Heart right ventricle (tissue), 16 donors: ENCODE measurements at regions of chr10 and their contacts with region 1.

Region 1: DNA sequence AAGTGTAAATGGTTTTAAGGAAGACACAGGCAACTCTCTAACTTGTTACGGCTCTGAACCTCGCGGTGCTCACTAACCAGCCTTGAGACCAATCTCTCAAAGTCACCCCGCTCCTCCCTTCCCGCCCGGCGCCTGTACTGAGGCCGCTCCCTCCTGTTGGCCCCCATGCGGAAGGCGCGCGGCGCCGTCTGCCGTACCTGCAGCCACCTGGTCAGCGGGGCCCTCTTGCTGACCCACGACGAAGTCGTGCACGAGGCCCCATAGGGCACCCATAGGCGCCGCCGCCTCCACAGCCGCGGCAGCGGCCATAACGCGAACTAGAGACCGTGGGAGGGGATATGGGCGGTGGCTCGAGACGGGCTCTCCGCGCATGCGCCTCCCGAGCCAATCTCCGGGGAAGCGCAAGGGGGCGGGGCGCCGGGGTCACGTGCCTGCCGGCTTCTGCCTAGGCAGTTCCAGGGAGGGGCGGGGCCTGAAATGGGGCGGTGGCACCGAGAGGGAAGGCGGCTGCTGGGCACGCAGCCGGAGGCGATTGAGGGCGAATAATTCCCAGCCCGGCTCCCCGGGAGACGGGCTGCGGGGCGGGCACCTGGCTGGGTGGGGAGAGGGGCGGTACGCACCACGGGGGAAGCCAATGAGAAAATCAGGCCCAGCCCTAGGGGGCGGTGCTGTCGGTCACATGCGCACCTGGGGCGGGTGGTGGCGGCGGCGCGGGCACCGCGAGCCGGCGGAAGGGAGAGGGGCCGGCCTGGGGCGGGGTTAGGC is at the start of gene MMS19:
- DNase-seq: peak; percentile 99 to 100
- ATAC-seq: peak; percentile 92 to 97 (median 94)
- H3K4me3 ChIP-seq: peak within 1 kb of the TSS; percentile 77 to 100 (median 94)
- H3K27ac ChIP-seq: peak within 1 kb of the TSS; percentile 74 to 97 (median 94)
- H3K4me1 ChIP-seq: peaks cover 9 to 79% (median 58%) of the 10 kb centered on the region in 9 donors
- H3K27me3 ChIP-seq: no peaks in the 10 kb centered on the region
- CTCF ChIP-seq: peak in 6 of 9 donors; percentile 12 to 43 (median 28)
- total RNA-seq, gene MMS19: 34.7 to 49.1 (median 43.8) TPM

Region 2: GRCh38 chr10:97355571-97355975 is 142.7 kb before region 1 on chr10:
- intact Hi-C with region 1: no loop called
- DNase-seq: peak in 1 of 2 donors; percentile 43
- ATAC-seq: peak; percentile 35 to 85 (median 68)
- H3K4me3 ChIP-seq: peak overlapping the region in 1 of 10 donors; percentile 2
- H3K27ac ChIP-seq: peak overlapping the region in 6 of 10 donors; percentile 6 to 72 (median 58)
- H3K4me1 ChIP-seq: peaks cover 0 to 37% (median 15%) of the 10 kb centered on the region in 9 donors
- H3K27me3 ChIP-seq: no peaks in the 10 kb centered on the region
- CTCF ChIP-seq: peak in 8 of 9 donors; percentile 26 to 65 (median 45)

Region 3: GRCh38 chr10:97445722-97446639 is 52.3 kb before region 1 on chr10 and contains the starts of genes EXOSC1 and ZDHHC16:
- intact Hi-C with region 1: loop called in 1 of 10 experiments (anchors 2 kb)
- DNase-seq: peak; percentile 85 to 93
- ATAC-seq: peak; percentile 97 to 99 (median 98)
- H3K4me3 ChIP-seq: peak within 1 kb of the TSS; percentile 68 to 99 (median 96)
- H3K27ac ChIP-seq: peak within 1 kb of the TSS in 8 of 10 donors; percentile 59 to 88 (median 79)
- H3K4me1 ChIP-seq: peaks cover 12 to 51% (median 44%) of the 10 kb centered on the region in 9 donors
- H3K27me3 ChIP-seq: no peaks in the 10 kb centered on the region
- CTCF ChIP-seq: peak in 3 of 9 donors; percentile 16 to 42 (median 18)
- total RNA-seq, gene EXOSC1: 11.7 to 20.3 (median 15.1) TPM
- total RNA-seq, gene ZDHHC16: 13.4 to 27.3 (median 18.4) TPM

Region 4: DNA sequence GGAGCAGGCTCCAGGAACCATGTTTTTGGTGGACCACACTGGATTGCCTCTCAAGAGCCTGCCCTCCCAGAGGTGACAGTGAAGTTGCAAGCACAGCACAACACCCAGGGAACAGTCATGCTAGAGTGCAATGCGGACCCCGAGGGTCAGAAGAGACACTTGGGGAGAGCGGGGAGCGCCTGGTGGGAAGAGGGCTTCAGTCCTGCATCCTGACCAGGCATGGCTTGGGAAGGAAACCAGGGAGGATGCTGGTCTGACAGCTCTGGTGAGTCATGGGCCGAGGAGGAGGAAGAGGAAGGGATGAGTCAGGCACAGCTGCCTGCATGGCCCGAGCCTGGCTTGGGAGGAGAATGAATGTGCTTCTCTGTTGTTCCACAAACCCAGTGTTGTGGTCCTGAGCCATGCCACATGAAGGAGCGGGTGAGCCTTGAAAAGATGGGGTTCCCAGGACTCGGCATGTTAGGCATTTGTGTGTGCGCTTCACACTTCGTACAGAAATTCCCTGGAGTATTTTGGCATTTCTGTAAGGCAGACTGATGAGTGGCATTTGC is 44.8 kb after region 1 on chr10:
- intact Hi-C with region 1: loop called in 3 of 10 experiments (anchors 5 kb)
- DNase-seq: peak; percentile 68 to 87
- ATAC-seq: peak; percentile 84 to 95 (median 88)
- H3K4me3 ChIP-seq: no peak overlapping the region
- H3K27ac ChIP-seq: peak overlapping the region; percentile 67 to 97 (median 92)
- H3K4me1 ChIP-seq: peaks cover 19 to 80% (median 58%) of the 10 kb centered on the region in 9 donors
- H3K27me3 ChIP-seq: no peaks in the 10 kb centered on the region
- CTCF ChIP-seq: no peak

Region 5: DNA sequence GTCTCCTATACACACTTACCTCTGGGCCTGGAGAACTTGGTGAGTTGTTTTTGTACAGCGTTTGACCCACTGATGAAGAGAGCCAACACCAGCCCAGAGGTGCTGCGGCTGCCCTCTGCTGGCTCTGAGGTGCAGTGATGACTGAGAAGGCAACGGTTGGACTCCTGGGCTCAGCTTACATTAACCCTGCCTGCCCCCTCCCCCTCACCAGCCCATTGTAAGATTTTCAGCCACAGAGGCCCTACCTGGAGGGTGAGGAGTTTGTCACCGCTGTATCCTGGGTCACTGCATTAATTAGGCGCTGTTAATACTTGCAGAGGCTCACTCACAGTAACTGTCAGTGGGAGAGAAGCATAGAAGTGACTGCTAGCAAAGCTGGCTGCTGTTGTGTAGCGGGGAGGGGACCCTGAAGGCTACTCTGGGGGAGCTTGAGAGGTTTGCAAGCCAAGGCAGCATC is 55.3 kb after region 1 on chr10:
- intact Hi-C with region 1: loop called in 5 of 10 experiments (anchors 2 to 5 kb)
- DNase-seq: peak; percentile 65 to 71
- ATAC-seq: peak; percentile 86 to 93 (median 88)
- H3K4me3 ChIP-seq: no peak overlapping the region
- H3K27ac ChIP-seq: no peak overlapping the region
- H3K4me1 ChIP-seq: peaks cover 8 to 41% (median 28%) of the 10 kb centered on the region in 9 donors
- H3K27me3 ChIP-seq: no peaks in the 10 kb centered on the region
- CTCF ChIP-seq: peak; percentile 69 to 92 (median 83)

Region 6: DNA sequence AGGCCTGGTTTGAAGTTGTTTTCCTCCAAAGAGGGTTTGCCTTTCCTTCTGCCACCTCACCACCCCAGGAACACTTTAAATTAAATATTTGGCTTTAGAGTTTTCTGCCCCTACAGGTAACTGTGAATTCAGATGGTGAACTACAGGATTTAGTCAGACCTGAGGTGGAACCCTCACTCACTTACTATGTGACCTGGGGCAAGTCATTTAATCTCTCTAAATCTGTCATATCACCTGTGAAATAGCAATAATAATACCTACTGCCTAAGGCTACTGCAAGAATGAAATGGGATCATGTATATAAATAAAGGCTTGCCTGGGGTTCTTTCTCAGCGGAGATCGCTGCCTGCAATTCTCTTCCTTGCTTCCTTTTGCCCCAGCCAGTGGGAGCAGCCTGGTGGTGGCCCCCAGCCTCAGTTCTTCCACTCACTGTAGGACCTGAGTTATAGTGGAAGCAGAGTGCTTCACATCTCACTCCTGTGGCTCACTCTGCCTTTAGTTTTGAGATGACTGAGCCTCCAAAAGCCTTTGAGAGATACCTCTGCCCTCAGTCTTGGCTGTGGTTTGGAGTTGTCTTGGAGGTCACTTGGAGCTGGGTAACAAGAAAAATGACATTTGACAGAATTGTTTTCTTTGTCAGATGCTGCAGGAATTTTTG is 68.2 kb after region 1 on chr10:
- intact Hi-C with region 1: no loop called
- DNase-seq: no peak
- ATAC-seq: no peak
- H3K4me3 ChIP-seq: no peak overlapping the region
- H3K27ac ChIP-seq: no peak overlapping the region
- H3K4me1 ChIP-seq: peaks cover 0 to 11% (median 9%) of the 10 kb centered on the region in 9 donors
- H3K27me3 ChIP-seq: no peaks in the 10 kb centered on the region
- CTCF ChIP-seq: no peak